ENCODE measurements at regions of chr5 and their contacts with region 1.

Region 1: DNA sequence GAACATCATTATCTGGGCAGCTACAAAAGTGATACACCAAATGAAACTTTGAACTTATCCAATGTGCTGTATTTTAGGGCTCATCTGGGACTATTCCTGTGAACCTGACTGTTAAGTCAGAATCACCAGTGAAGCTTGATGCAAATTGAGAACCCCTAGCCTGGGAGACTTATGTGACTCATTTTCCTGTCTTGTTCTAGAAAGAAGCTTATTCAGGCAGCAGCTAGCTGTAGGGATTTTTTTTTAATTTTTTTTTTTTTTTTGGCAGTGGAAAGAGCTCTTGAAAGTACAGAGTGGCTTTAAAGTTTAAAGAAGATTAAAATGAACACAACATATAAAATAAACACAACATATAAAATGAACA is 81.1 kb upstream of the TNFAIP8 start:
- DNase-seq: no peak
- H3K4me3 ChIP-seq: no peak overlapping the region
- H3K27ac ChIP-seq: peak overlapping the region in 2 of 59 donors; percentile 11 to 26
- H3K27me3 ChIP-seq: no peaks in the 10 kb centered on the region
- CTCF ChIP-seq: no peak

Region 2: GRCh38 chr5:119070828-119071572 is 203.7 kb before region 1 on chr5 and contains the start of gene DMXL1:
- intact Hi-C with region 1: loop called (anchors 2 to 5 kb)
- DNase-seq: peak; percentile 97 to 100 (median 99)
- H3K4me3 ChIP-seq: peak within 1 kb of the TSS; percentile 58 to 99 (median 94)
- H3K27ac ChIP-seq: peak within 1 kb of the TSS; percentile 68 to 99 (median 97)
- H3K27me3 ChIP-seq: no peaks in the 10 kb centered on the region
- CTCF ChIP-seq: peak in 21 of 56 donors; percentile 2 to 43 (median 11)
- total RNA-seq, gene DMXL1: 59.0 to 112 (median 84.6) TPM

Region 3: GRCh38 chr5:119322948-119323537 is 48.3 kb after region 1 on chr5:
- intact Hi-C with region 1: loop called in 1 of 2 experiments (anchors 5 kb)
- DNase-seq: no peak
- H3K4me3 ChIP-seq: no peak overlapping the region
- H3K27ac ChIP-seq: peak overlapping the region in 2 of 59 donors; percentile 3 to 53
- H3K27me3 ChIP-seq: no peaks in the 10 kb centered on the region
- CTCF ChIP-seq: no peak

Region 4: GRCh38 chr5:119340597-119341218 is 66.0 kb after region 1 on chr5:
- intact Hi-C with region 1: no loop called
- DNase-seq: no peak
- H3K4me3 ChIP-seq: no peak overlapping the region
- H3K27ac ChIP-seq: no peak overlapping the region
- H3K27me3 ChIP-seq: peaks cover 0 to 7% (median 0%) of the 10 kb centered on the region in 45 donors
- CTCF ChIP-seq: no peak

Measured in dorsolateral prefrontal cortex (tissue), 120 donors.